ENCODE measurements at regions of chr9 and their contacts with region 1.

Region 1: DNA sequence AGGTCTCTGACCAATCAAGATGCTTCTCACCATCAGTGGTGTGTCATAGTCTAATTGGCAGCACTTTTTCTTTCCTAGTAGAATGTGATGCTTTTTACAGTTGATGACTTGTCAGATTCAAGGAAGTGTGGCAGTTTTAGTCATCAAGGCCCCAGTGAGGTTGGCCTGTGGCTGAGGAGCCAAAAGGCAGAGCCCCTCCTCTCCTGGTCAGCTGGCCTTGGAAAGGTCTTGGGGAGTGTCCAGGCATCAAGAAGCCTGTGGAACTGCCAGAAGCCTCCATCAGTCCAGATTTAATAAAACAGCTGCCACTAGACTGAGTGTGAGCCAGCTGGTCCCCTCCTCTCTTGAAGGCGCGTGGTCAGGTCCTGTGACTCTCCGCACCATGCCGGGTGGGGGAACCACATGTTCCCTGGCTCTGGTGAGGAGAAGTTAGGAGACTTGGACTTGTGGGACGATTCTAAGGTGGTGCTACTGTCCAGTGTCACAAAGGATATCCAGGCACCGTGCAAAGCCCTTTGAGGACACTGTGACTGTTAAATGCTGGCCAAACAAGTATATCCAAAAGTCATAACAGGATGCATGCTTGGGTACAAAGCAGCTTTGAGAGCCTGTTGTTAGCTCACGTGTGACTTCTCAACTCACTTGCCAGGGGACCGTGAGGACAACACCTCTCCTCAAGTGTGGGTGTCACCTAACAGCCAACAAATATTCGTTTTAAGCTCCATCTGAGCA is 6.1 kb upstream of the ANGPTL2 start:
- DNase-seq: no peak
- ATAC-seq: no peak
- H3K4me3 ChIP-seq: no peak overlapping the region
- H3K27ac ChIP-seq: no peak overlapping the region
- H3K4me1 ChIP-seq: peaks cover 9 to 21% of the 10 kb centered on the region in 2 experiments
- H3K27me3 ChIP-seq: peaks cover 15 to 42% of the 10 kb centered on the region in 2 experiments; a peak in 4 of 5 replicates
- CTCF ChIP-seq: no peak
- EP300 ChIP-seq: no peak
- POLR2A ChIP-seq: no peak
- RAD21 ChIP-seq: no peak

Region 2: GRCh38 chr9:127014216-127014615 is 114.3 kb before region 1 on chr9:
- CTCF ChIA-PET with region 1: no interaction called
- POLR2A ChIA-PET with region 1: no interaction called
- in situ Hi-C with region 1: no loop called
- intact Hi-C with region 1: no loop called
- DNase-seq: no peak
- ATAC-seq: no peak
- H3K4me3 ChIP-seq: no peak overlapping the region
- H3K27ac ChIP-seq: no peak overlapping the region
- H3K4me1 ChIP-seq: no peaks in the 10 kb centered on the region
- H3K27me3 ChIP-seq: peaks cover 20 to 51% of the 10 kb centered on the region in 2 experiments
- CTCF ChIP-seq: no peak
- EP300 ChIP-seq: no peak
- POLR2A ChIP-seq: no peak
- RAD21 ChIP-seq: no peak

Region 3: GRCh38 chr9:127065592-127065991 is 62.9 kb before region 1 on chr9:
- CTCF ChIA-PET with region 1: no interaction called
- POLR2A ChIA-PET with region 1: no interaction called
- in situ Hi-C with region 1: no loop called
- intact Hi-C with region 1: loop called (anchors 2 kb)
- DNase-seq: no peak
- ATAC-seq: no peak
- H3K4me3 ChIP-seq: no peak overlapping the region
- H3K27ac ChIP-seq: no peak overlapping the region
- H3K4me1 ChIP-seq: no peaks in the 10 kb centered on the region
- H3K27me3 ChIP-seq: peaks cover 4 to 12% of the 10 kb centered on the region in 2 experiments; a peak in 4 of 5 replicates
- CTCF ChIP-seq: no peak
- EP300 ChIP-seq: no peak
- POLR2A ChIP-seq: no peak
- RAD21 ChIP-seq: no peak

Region 4: GRCh38 chr9:127187231-127187956 is 58.9 kb after region 1 on chr9:
- CTCF ChIA-PET with region 1: no interaction called
- POLR2A ChIA-PET with region 1: no interaction called
- in situ Hi-C with region 1: no loop called
- intact Hi-C with region 1: no loop called
- DNase-seq: peak; percentile 62 to 79 (median 72)
- ATAC-seq: peak; percentile 93
- H3K4me3 ChIP-seq: no peak overlapping the region
- H3K27ac ChIP-seq: peak overlapping the region; percentile 31; the same call in 2 of the 3 replicates
- H3K4me1 ChIP-seq: peaks cover 13 to 17% of the 10 kb centered on the region in 2 experiments; a peak in 4 of 5 replicates
- H3K27me3 ChIP-seq: peaks cover 2 to 15% of the 10 kb centered on the region in 2 experiments; a peak in 3 of 5 replicates
- CTCF ChIP-seq: no peak
- EP300 ChIP-seq: peak; percentile 57
- POLR2A ChIP-seq: no peak
- RAD21 ChIP-seq: no peak

Measured in K562 (cell line).